ENCODE measurements at regions of chr9 and their contacts with region 1.

Region 1: DNA sequence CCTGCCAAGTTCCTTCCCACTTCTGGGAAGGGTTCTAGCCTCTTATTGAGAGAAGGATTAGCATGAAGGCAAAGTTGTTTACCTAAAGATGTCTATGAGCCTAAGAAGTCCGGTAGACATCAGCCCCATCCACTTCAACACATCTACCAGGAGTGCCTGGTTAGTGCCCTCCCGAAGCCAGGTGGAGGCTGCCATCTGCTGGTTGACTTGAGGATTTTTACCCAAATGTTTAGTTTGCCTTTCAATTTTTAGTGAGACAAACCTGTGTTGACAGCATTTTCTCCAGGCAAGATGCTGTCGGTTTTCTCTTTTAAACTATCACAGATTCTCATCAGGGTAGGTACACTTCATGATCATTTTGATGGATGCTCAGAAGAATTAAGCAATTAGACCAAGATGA is 83.6 kb upstream of the TNFSF8 start:
- DNase-seq: peak; percentile 66 to 73 (median 73)
- ATAC-seq: peak; percentile 80 to 90 (median 86)
- H3K4me3 ChIP-seq: no peak overlapping the region
- H3K27ac ChIP-seq: no peak overlapping the region
- H3K4me1 ChIP-seq: no peaks in the 10 kb centered on the region
- H3K27me3 ChIP-seq: no peaks in the 10 kb centered on the region
- CTCF ChIP-seq: peak; percentile 77 to 83 (median 81)
- POLR2A ChIP-seq: no peak

Region 2: DNA sequence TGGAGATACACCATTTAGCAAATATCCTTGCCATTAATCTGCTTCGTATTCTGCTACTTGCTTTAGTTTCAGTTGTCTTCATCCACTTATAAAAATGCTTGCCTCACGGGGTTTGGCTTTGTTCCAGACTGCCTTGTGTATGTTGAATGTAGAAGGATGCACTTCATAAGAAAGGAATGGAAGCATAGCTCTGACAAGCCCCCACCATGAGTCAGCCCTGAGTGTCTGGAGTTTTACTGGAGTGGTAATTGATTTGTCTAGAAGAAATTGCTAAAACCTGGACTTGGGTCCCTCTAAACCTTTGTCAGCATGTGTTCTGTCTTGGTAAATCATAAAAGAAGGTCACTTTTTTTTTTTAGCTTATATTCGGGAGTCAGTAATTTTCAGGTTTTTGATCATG is 336.6 kb before region 1 on chr9:
- intact Hi-C with region 1: loop called in 1 of 2 experiments (anchors 5 kb)
- DNase-seq: no peak
- ATAC-seq: no peak
- H3K4me3 ChIP-seq: no peak overlapping the region
- H3K27ac ChIP-seq: no peak overlapping the region
- H3K4me1 ChIP-seq: no peaks in the 10 kb centered on the region
- H3K27me3 ChIP-seq: no peaks in the 10 kb centered on the region
- CTCF ChIP-seq: no peak
- POLR2A ChIP-seq: no peak

Region 3: DNA sequence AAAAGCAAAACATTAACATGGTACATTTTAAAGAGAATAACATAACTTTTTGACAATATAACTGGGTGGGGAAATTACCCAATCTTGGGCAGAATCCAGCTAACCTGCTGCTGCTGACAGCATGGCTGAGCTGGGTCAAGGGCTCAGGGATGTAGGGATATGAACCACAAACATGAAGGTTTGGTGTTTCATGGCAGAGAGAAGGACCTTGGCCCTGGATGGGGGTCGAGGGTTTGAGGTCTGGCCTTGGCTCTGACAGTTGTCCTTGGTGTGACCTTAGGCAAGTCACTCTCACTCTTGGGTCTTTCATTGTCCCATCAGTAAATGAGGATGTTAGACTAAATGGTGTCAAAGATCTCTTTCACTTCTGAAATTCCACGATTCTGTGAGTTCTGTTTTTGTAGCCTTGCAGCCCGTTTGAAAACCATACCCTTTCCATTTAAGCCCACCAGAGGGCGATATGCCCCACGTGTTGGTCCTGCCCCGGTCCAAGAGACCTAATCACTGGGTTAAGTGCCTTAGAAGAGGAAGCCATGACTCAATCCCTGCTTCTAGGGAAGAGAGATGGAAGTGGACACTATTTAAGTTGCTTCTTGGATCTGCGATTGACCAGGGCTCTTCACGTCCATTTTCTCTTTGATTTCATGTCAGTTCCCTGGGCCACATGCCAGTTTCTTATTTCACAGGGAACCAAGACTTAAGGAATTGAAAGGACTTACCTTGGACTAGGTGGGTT is 275.2 kb before region 1 on chr9:
- intact Hi-C with region 1: loop called (anchors 5 to 10 kb)
- DNase-seq: peak; percentile 60 to 75 (median 68)
- ATAC-seq: peak; percentile 97 to 99 (median 99)
- H3K4me3 ChIP-seq: no peak overlapping the region
- H3K27ac ChIP-seq: no peak overlapping the region
- H3K4me1 ChIP-seq: peaks cover 0 to 12% (median 0%) of the 10 kb centered on the region in 4 donors
- H3K27me3 ChIP-seq: no peaks in the 10 kb centered on the region
- CTCF ChIP-seq: peak; percentile 84 to 94 (median 94)
- POLR2A ChIP-seq: no peak

Region 4: DNA sequence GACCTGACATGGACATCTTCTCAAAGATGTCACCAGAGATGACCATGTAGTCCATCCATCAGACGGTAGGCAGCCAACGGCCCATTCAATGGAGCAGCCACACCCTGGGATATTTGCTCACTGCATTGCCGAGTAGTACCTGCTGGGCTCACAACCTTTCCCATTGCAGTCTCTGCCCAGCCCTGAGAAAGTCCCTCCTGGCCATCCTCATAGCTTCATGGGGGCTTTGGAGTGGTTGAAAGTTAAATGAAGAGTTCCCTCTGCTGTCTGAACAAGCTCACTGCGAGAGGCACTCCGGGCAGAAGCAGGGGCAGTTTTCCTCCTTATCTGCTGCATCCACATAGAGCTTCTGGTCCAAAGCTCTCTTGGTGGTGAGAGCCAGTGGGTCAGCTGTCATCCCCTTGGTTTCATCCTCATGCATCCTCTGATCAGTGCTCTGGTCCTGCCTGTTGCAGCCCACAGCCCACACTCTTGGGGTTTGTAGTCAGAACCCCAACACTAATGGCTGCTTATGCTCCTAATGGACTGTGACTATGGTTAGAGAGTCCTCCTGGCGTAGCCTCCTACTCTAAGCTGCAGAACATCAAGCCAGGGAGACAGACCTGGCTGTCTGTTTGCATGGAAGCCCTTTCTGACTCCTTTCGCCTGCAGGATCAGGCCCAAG is 107.0 kb before region 1 on chr9:
- intact Hi-C with region 1: loop called (anchors 5 to 10 kb)
- DNase-seq: no peak
- ATAC-seq: peak; percentile 64 to 69 (median 66)
- H3K4me3 ChIP-seq: no peak overlapping the region
- H3K27ac ChIP-seq: no peak overlapping the region
- H3K4me1 ChIP-seq: peaks cover 0 to 12% (median 6%) of the 10 kb centered on the region in 4 donors
- H3K27me3 ChIP-seq: no peaks in the 10 kb centered on the region
- CTCF ChIP-seq: peak; percentile 57 to 71 (median 62)
- POLR2A ChIP-seq: no peak

Measured in right lobe of liver (tissue), 6 donors.